ENCODE measurements at regions of chr5 and their contacts with region 1.

Region 1: GRCh38 chr5:173925448-173926071 is 37.4 kb downstream of the CPEB4 start:
- DNase-seq: peak; percentile 28
- CTCF ChIP-seq: peak; percentile 73

Region 2: DNA sequence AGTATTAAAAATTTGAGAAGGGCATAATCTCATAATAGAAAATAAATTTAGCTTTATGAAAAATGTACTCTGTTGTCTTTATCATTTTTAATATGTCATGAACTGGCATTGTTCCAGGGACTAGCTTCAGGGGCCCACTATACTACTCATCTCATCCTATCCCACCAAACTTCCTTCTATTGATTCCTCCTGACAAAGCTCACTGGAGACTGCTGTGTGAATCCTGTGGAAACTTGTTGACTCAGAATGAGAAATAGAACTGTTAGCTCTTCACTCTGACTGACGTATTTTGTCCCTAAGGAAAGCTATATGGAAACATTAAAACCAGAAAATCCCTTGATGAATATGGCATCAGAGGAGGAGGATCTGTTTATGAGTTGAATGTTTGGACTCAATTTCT is 811.0 kb before region 1 on chr5:
- CTCF ChIA-PET with region 1: no interaction called
- POLR2A ChIA-PET with region 1: no interaction called
- DNase-seq: no peak
- CTCF ChIP-seq: no peak

Region 3: GRCh38 chr5:173554038-173554954 is 371.3 kb before region 1 on chr5:
- CTCF ChIA-PET with region 1: no interaction called
- POLR2A ChIA-PET with region 1: no interaction called
- DNase-seq: no peak
- CTCF ChIP-seq: no peak

Region 4: GRCh38 chr5:173625696-173626504 is 299.7 kb before region 1 on chr5:
- CTCF ChIA-PET with region 1: interaction called, 12 read pairs
- POLR2A ChIA-PET with region 1: no interaction called
- DNase-seq: peak; percentile 52
- CTCF ChIP-seq: peak; percentile 60

Region 5: DNA sequence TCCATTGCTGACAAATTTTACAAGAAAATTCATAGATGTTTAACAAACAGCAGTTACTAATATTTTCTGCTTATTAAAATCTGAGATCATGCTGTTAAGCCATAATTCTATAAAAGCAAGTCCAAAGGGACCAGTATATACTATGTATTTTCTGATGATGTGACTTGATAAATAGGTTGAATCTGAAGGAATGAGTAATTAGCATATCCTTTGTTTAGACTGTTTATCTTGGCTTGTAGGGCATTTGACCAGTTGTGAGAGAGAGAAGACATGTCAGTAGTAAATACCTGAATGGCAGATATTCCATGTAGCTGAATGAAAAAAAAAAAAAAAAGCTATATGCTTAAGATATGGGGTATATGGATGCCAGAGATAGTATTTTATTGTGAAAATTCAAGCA is 22.8 kb before region 1 on chr5:
- CTCF ChIA-PET with region 1: interaction called, 29 read pairs
- POLR2A ChIA-PET with region 1: no interaction called
- DNase-seq: no peak
- CTCF ChIP-seq: no peak

Region 6: GRCh38 chr5:173915310-173916014 is 10.1 kb before region 1 on chr5:
- CTCF ChIA-PET with region 1: interaction called, 29 read pairs
- POLR2A ChIA-PET with region 1: no interaction called
- DNase-seq: no peak
- CTCF ChIP-seq: no peak

Region 7: DNA sequence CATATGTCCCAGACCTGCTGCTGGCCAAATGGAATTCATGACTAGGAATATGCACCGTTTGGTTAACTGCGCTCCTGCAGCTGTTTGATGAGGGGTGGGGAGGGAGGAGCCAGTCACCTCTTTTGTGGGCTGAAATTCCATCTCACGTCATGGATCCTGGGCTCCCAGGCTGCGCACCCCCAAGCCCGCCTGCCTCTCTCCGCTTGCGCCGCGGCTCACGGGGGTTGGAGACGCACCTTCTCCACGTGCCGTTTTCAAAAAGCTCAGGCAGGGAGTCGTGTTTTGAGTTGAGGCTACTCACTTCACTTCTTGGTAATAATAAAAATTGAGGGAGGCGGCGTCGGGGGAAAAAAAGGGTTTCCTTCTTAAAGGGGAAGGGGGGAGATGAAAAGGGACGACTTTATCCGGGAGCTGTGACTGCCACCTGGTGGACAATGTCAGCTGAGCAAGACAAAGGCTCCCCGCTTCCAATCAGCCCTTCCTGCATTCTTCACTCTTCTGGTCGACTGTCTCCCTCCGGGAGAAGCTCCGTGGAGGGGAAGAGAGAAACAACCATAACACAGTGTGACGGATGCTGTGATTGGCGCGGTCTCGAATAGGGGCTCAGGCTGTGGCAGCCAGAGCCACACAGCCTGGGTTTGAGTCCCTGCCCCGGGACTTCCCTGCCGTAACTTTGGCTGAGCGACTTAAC is 47.5 kb after region 1 on chr5:
- CTCF ChIA-PET with region 1: interaction called, 29 read pairs
- POLR2A ChIA-PET with region 1: no interaction called
- DNase-seq: peak; percentile 87
- CTCF ChIP-seq: peak; percentile 72

Region 8: DNA sequence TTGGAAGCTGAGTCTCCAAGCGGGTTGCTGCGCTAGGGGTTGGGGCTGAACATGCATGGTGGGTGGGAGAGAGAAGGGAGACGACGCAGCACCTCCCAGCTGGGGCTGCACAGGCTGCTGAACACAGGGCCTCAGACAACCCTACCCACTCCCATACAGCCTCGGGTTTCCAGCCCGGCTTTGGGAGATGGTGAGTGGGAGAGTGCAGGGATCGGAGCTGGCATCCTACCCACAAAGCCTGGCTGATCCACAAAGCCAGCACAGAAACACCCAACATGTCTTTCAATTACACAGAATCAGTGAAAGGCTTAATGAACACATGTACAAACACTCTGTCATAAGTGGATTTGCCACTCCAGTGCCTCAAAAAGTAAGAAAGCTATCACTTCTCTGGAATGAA is 184.8 kb after region 1 on chr5:
- CTCF ChIA-PET with region 1: no interaction called
- POLR2A ChIA-PET with region 1: no interaction called
- DNase-seq: no peak
- CTCF ChIP-seq: no peak

Measured in GM10248 (cell line).